ENCODE measurements at regions of chr1 and their contacts with region 1.

Region 1: GRCh38 chr1:99808391-99809115 is 41.6 kb upstream of the AGL start:
- DNase-seq: peak; percentile 96
- ATAC-seq: peak; percentile 97
- H3K4me3 ChIP-seq: peak overlapping the region; percentile 7; the same call in 1 of the 2 replicates
- H3K27ac ChIP-seq: no peak overlapping the region
- H3K4me1 ChIP-seq: no peaks in the 10 kb centered on the region; the same call in 1 of the 2 replicates
- H3K27me3 ChIP-seq: peaks cover 18% of the 10 kb centered on the region
- CTCF ChIP-seq: peak; percentile 84
- POLR2A ChIP-seq: no peak
- RAD21 ChIP-seq: peak; percentile 88

Region 2: GRCh38 chr1:99737016-99737415 is 71.5 kb before region 1 on chr1:
- CTCF ChIA-PET with region 1: no interaction called
- POLR2A ChIA-PET with region 1: no interaction called
- dilution Hi-C with region 1: no loop called
- in situ Hi-C with region 1: no loop called
- intact Hi-C with region 1: no loop called
- DNase-seq: peak; percentile 77
- ATAC-seq: peak; percentile 100
- H3K4me3 ChIP-seq: no peak overlapping the region
- H3K27ac ChIP-seq: no peak overlapping the region
- H3K4me1 ChIP-seq: no peaks in the 10 kb centered on the region
- H3K27me3 ChIP-seq: no peaks in the 10 kb centered on the region
- CTCF ChIP-seq: peak; percentile 72
- POLR2A ChIP-seq: no peak
- RAD21 ChIP-seq: peak; percentile 81

Region 3: DNA sequence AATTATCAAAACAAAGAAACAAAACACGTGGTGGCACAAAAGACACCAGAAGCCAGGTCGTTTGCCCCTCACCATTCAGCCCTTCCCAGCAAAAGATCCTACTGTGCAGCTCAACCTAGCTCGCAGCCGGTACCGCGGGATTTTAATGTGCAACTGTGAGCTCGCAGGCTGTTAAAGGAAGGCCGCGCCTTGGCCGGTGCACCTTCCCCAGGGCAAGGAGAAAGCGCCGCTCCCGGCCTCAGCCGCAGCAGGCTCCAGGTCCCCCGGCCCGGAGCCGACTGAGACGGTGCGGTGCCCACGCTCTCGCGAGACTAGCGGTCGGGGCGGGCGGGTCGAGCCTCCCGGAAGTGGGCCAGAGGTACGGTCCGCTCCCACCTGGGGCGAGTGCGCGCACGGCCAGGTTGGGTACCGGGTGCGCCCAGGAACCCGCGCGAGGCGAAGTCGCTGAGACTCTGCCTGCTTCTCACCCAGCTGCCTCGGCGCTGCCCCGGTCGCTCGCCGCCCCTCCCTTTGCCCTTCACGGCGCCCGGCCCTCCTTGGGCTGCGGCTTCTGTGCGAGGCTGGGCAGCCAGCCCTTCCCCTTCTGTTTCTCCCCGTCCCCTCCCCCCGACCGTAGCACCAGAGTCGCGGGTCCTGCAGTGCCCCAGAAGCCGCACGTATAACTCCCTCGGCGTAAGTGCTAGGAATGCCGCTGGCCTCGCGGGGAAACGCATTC is 41.3 kb after region 1 on chr1 and contains the start of gene AGL:
- CTCF ChIA-PET with region 1: no interaction called
- POLR2A ChIA-PET with region 1: no interaction called
- dilution Hi-C with region 1: no loop called
- in situ Hi-C with region 1: no loop called
- intact Hi-C with region 1: loop called (anchors 1 kb)
- DNase-seq: peak; percentile 61
- ATAC-seq: peak; percentile 98
- H3K4me3 ChIP-seq: peak within 1 kb of the TSS; percentile 87
- H3K27ac ChIP-seq: peak within 1 kb of the TSS; percentile 69
- H3K4me1 ChIP-seq: peaks cover 2% of the 10 kb centered on the region; the same call in 1 of the 2 replicates
- H3K27me3 ChIP-seq: no peaks in the 10 kb centered on the region
- CTCF ChIP-seq: no peak
- POLR2A ChIP-seq: no peak
- RAD21 ChIP-seq: no peak
- total RNA-seq, gene AGL: 7.0 and 12.2 TPM in 2 replicates

Region 4: DNA sequence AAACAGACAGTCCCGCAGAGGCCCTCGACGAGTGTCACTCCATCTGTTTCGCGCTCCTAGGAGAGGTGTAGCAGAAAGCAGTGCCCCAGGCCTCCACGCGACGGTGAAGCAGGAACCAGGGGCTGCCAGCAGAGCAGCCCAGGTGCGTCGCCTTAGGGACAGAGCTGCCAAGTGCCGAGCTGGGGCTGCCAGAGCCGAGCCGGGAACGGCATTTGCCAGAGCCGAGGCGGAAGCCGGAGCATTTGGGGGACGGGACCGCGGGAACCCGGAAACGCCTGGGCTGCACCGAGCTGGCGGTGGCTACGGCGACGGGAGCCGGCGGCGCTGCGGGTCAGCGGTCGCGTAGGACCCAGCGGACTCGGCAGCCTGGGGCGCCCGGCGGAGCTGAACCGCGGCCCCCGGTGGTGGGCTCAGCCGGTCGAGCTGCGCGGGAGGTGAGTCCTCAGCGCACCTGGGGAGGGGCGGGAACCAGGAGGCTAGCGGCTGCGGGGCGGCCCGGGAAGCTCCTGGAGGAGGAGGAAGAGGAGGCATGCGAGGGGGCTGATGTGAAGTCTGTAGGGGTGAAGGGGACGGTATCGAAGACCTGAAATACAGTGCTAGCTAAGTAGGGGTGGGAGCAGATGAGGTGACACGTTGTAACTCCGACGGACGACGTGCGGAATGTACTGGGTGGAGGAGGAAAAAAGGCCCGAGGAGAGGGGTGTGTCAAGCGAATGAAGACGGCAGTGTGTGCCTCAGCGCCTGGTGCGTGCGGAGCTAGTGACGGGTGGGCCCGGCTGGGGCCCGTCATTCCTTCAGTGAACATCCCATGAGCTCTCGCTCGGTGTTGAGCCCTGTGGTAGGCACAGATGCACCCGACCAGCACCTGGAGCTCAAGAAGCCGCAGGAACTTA is 161.4 kb after region 1 on chr1 and contains the start of gene SLC35A3:
- CTCF ChIA-PET with region 1: no interaction called
- POLR2A ChIA-PET with region 1: no interaction called
- dilution Hi-C with region 1: no loop called
- in situ Hi-C with region 1: no loop called
- intact Hi-C with region 1: loop called (anchors 2 kb)
- DNase-seq: peak; percentile 61
- ATAC-seq: peak; percentile 98
- H3K4me3 ChIP-seq: peak within 1 kb of the TSS; percentile 94
- H3K27ac ChIP-seq: peak within 1 kb of the TSS; percentile 77
- H3K4me1 ChIP-seq: peaks cover 4% of the 10 kb centered on the region
- H3K27me3 ChIP-seq: no peaks in the 10 kb centered on the region
- CTCF ChIP-seq: no peak
- POLR2A ChIP-seq: peak; percentile 51
- RAD21 ChIP-seq: no peak
- total RNA-seq, gene SLC35A3: 13.6 and 34.4 TPM in 2 replicates

Region 5: GRCh38 chr1:100037927-100038659 is 229.5 kb after region 1 on chr1:
- CTCF ChIA-PET with region 1: no interaction called
- POLR2A ChIA-PET with region 1: no interaction called
- dilution Hi-C with region 1: no loop called
- in situ Hi-C with region 1: no loop called
- intact Hi-C with region 1: loop called (anchors 1 kb)
- DNase-seq: peak; percentile 83
- ATAC-seq: peak; percentile 95
- H3K4me3 ChIP-seq: peak overlapping the region; percentile 99
- H3K27ac ChIP-seq: peak overlapping the region; percentile 99
- H3K4me1 ChIP-seq: no peaks in the 10 kb centered on the region
- H3K27me3 ChIP-seq: no peaks in the 10 kb centered on the region
- CTCF ChIP-seq: no peak
- POLR2A ChIP-seq: peak; percentile 95
- RAD21 ChIP-seq: no peak

Region 6: GRCh38 chr1:100132566-100133477 is 324.3 kb after region 1 on chr1 and contains the starts of genes SASS6 and TRMT13:
- CTCF ChIA-PET with region 1: interaction called, 3 read pairs
- POLR2A ChIA-PET with region 1: no interaction called
- dilution Hi-C with region 1: no loop called
- in situ Hi-C with region 1: loop called (anchors 10 kb)
- intact Hi-C with region 1: loop called (anchors 2 kb)
- DNase-seq: peak; percentile 99
- ATAC-seq: peak; percentile 99
- H3K4me3 ChIP-seq: peak within 1 kb of the TSS; percentile 72
- H3K27ac ChIP-seq: peak within 1 kb of the TSS; percentile 71
- H3K4me1 ChIP-seq: peaks cover 1% of the 10 kb centered on the region; the same call in 1 of the 2 replicates
- H3K27me3 ChIP-seq: no peaks in the 10 kb centered on the region
- CTCF ChIP-seq: no peak
- POLR2A ChIP-seq: peak; percentile 45; the same call in 1 of the 2 replicates
- RAD21 ChIP-seq: no peak
- total RNA-seq, gene SASS6: 2.7 and 5.0 TPM in 2 replicates
- total RNA-seq, gene TRMT13: 5.2 and 12.8 TPM in 2 replicates

Region 7: GRCh38 chr1:100265931-100266740 is 457.6 kb after region 1 on chr1 and contains the start of gene RTCA:
- CTCF ChIA-PET with region 1: no interaction called
- POLR2A ChIA-PET with region 1: no interaction called
- dilution Hi-C with region 1: no loop called
- in situ Hi-C with region 1: loop called (anchors 25 kb)
- intact Hi-C with region 1: loop called (anchors 2 kb)
- DNase-seq: peak; percentile 93
- ATAC-seq: peak; percentile 99
- H3K4me3 ChIP-seq: peak within 1 kb of the TSS; percentile 66
- H3K27ac ChIP-seq: peak within 1 kb of the TSS; percentile 78
- H3K4me1 ChIP-seq: peaks cover 2% of the 10 kb centered on the region; the same call in 1 of the 2 replicates
- H3K27me3 ChIP-seq: no peaks in the 10 kb centered on the region
- CTCF ChIP-seq: no peak
- POLR2A ChIP-seq: no peak
- RAD21 ChIP-seq: no peak
- total RNA-seq, gene RTCA: 29.6 and 45.3 TPM in 2 replicates

Region 8: DNA sequence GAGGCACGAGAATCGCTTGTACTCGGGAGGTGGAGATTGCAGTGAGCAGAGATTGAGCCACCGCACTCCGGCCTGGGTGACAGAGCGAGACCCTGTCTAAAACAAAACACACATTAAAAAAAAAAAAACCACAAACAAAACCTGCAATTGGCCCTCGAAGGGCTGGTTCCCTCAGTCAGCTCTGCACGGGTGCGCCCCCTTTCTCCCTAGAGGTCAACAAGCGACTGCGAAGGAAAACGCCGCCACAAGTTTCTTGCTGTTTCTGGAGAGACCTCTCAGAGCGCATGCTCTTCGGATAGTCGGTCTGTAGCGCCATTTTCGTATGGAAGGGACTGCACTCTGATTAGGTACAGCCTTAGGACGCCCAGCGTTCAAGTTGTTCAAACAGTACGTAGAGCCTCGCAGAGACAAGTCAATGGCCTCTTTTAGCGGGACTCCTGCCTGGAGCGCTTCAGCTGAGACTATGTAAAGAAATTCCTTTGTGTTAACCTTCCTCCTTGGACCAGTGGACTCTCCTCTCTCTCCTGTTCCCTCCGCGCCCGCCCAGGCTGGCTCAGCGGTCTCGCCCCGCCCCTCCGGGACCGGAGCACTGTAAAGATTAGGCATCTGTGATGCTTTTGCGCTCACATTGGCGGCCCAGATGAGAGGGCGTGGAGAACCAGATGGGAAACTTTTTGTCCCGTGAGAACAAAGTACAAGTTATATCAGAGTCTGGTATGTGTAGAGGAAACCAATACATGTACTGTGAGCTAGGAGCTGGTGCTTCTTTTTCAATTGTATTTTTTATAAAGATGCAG is 542.7 kb after region 1 on chr1:
- CTCF ChIA-PET with region 1: no interaction called
- POLR2A ChIA-PET with region 1: no interaction called
- dilution Hi-C with region 1: no loop called
- in situ Hi-C with region 1: no loop called
- intact Hi-C with region 1: loop called (anchors 10 kb)
- DNase-seq: peak; percentile 84
- ATAC-seq: peak; percentile 79
- H3K4me3 ChIP-seq: peak overlapping the region; percentile 86
- H3K27ac ChIP-seq: peak overlapping the region; percentile 69
- H3K4me1 ChIP-seq: peaks cover 4% of the 10 kb centered on the region; the same call in 1 of the 2 replicates
- H3K27me3 ChIP-seq: no peaks in the 10 kb centered on the region
- CTCF ChIP-seq: no peak
- POLR2A ChIP-seq: peak; percentile 20; the same call in 1 of the 2 replicates
- RAD21 ChIP-seq: no peak